Caco-2 (cell line): ENCODE measurements at regions of chr4 and their contacts with region 1.

Region 1: GRCh38 chr4:47836641-47837093 is 1.2 kb downstream of the CORIN start:
- DNase-seq: peak; percentile 84 to 87
- H3K4me3 ChIP-seq: peak overlapping the region; percentile 64
- H3K4me3 Mint-ChIP-seq: peak overlapping the region; percentile 83
- H3K27ac Mint-ChIP-seq: no peak overlapping the region
- H3K4me1 ChIP-seq: no peaks in the 10 kb centered on the region
- H3K4me1 Mint-ChIP-seq: peaks cover 6% of the 10 kb centered on the region
- H3K27me3 ChIP-seq: no peaks in the 10 kb centered on the region
- H3K27me3 Mint-ChIP-seq: no peaks in the 10 kb centered on the region
- CTCF ChIP-seq: peak; percentile 59 to 85

Region 2: DNA sequence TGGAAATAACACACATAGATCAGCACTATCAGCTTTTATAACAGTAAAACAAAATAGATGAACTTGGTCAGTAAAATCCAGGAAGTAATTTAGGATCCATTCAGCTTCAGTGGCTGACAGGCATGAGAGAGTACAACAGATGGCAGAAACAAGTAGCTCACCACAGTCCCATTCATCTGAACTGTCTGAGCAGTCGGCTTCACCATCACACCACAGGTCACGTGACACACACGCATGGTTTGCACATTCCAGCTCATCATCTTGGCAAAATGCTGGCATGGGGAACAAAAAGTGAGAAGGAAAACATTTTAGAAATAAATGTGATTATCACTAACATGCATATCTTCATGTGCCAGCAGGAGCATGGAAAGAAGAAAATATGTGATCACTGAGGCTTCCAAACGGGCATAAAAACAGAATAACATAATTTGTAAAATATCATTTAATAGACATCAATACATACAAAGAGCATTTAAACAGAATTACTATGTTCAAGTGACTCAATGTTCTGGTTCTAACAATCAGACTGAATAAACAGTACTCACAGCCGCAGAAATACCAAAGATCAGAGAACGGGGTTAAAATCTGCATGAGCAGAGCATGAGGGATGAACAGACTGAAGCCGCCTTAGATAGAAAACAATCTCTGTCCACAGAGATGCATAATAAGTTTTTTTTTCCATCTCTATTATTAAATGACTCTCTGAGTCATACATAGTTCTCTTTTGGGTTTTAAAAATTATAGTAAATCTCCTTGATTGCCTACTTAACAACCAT is 193.5 kb before region 1 on chr4:
- CTCF ChIA-PET with region 1: no interaction called
- POLR2A ChIA-PET with region 1: no interaction called
- intact Hi-C with region 1: no loop called
- DNase-seq: no peak
- H3K4me3 ChIP-seq: no peak overlapping the region
- H3K4me3 Mint-ChIP-seq: no peak overlapping the region
- H3K27ac Mint-ChIP-seq: no peak overlapping the region
- H3K4me1 ChIP-seq: no peaks in the 10 kb centered on the region
- H3K4me1 Mint-ChIP-seq: no peaks in the 10 kb centered on the region
- H3K27me3 ChIP-seq: no peaks in the 10 kb centered on the region
- H3K27me3 Mint-ChIP-seq: no peaks in the 10 kb centered on the region
- CTCF ChIP-seq: no peak

Region 3: GRCh38 chr4:47668810-47669408 is 167.8 kb before region 1 on chr4:
- CTCF ChIA-PET with region 1: interaction called, 12 read pairs
- POLR2A ChIA-PET with region 1: no interaction called
- intact Hi-C with region 1: loop called (anchors 1 kb)
- DNase-seq: peak in 1 of 2 experiments; percentile 49
- H3K4me3 ChIP-seq: no peak overlapping the region
- H3K4me3 Mint-ChIP-seq: no peak overlapping the region
- H3K27ac Mint-ChIP-seq: no peak overlapping the region
- H3K4me1 ChIP-seq: peaks cover 3% of the 10 kb centered on the region; the same call in 1 of the 2 replicates
- H3K4me1 Mint-ChIP-seq: peaks cover 7% of the 10 kb centered on the region
- H3K27me3 ChIP-seq: no peaks in the 10 kb centered on the region; the same call in 1 of the 2 replicates
- H3K27me3 Mint-ChIP-seq: no peaks in the 10 kb centered on the region
- CTCF ChIP-seq: peak; percentile 50 to 58

Region 4: GRCh38 chr4:47686294-47686872 is 150.3 kb before region 1 on chr4:
- CTCF ChIA-PET with region 1: interaction called, 11 read pairs
- POLR2A ChIA-PET with region 1: no interaction called
- intact Hi-C with region 1: loop called (anchors 1 kb)
- DNase-seq: peak; percentile 54 to 70
- H3K4me3 ChIP-seq: no peak overlapping the region
- H3K4me3 Mint-ChIP-seq: no peak overlapping the region
- H3K27ac Mint-ChIP-seq: no peak overlapping the region
- H3K4me1 ChIP-seq: no peaks in the 10 kb centered on the region
- H3K4me1 Mint-ChIP-seq: no peaks in the 10 kb centered on the region
- H3K27me3 ChIP-seq: no peaks in the 10 kb centered on the region
- H3K27me3 Mint-ChIP-seq: peaks cover 8% of the 10 kb centered on the region
- CTCF ChIP-seq: peak; percentile 68 to 74

Region 5: GRCh38 chr4:47704693-47705325 is 131.9 kb before region 1 on chr4:
- CTCF ChIA-PET with region 1: interaction called, 108 read pairs
- POLR2A ChIA-PET with region 1: interaction called, 3 read pairs
- intact Hi-C with region 1: loop called (anchors 1 kb)
- DNase-seq: peak; percentile 63 to 67
- H3K4me3 ChIP-seq: no peak overlapping the region
- H3K4me3 Mint-ChIP-seq: no peak overlapping the region
- H3K27ac Mint-ChIP-seq: no peak overlapping the region
- H3K4me1 ChIP-seq: no peaks in the 10 kb centered on the region
- H3K4me1 Mint-ChIP-seq: no peaks in the 10 kb centered on the region
- H3K27me3 ChIP-seq: no peaks in the 10 kb centered on the region
- H3K27me3 Mint-ChIP-seq: no peaks in the 10 kb centered on the region
- CTCF ChIP-seq: peak; percentile 49 to 73

Region 6: DNA sequence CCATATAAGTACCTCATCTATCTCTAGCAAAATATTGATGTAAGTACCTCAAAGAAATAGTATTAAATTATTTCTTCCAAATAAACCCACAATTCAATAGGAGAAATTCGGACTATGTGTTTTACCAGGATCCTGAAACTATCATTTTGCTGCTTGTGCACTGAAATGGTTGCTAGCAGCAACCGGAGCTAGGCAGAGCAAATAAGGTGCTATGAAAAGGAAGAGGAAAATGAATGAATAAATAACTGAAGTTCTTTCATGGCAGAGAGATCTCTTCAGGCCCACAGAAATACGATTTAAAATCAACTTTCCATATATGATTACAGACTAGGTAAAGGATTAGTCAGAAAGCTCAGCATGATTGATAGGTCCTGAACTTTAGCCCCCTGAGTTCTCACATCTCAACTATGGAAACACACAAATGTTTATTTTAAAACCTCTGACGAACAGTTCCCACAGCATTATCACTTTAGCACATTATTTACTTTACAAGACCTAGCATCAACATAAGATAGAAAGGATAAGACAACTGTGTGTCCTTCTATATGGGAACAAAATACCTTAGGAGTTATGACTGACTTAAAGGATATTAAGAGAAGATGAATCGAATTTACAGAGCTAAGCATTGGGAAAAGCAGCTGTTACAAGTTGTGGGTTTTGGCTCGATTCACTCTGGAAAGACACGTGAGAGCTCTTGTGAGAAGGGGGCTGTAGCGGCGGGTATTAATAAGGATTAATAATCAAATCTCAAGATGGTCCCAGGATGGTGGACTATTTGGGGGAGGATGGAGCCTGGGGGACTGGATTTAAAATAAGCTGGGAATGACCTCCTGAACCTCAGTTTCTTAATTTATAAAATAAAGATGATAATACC is 103.1 kb before region 1 on chr4:
- CTCF ChIA-PET with region 1: interaction called, 10 read pairs
- POLR2A ChIA-PET with region 1: no interaction called
- intact Hi-C with region 1: no loop called
- DNase-seq: peak in 1 of 2 experiments; percentile 24
- H3K4me3 ChIP-seq: no peak overlapping the region
- H3K4me3 Mint-ChIP-seq: peak overlapping the region; percentile 12
- H3K27ac Mint-ChIP-seq: no peak overlapping the region
- H3K4me1 ChIP-seq: peaks cover 6% of the 10 kb centered on the region
- H3K4me1 Mint-ChIP-seq: peaks cover 8% of the 10 kb centered on the region
- H3K27me3 ChIP-seq: no peaks in the 10 kb centered on the region
- H3K27me3 Mint-ChIP-seq: no peaks in the 10 kb centered on the region
- CTCF ChIP-seq: no peak

Region 7: DNA sequence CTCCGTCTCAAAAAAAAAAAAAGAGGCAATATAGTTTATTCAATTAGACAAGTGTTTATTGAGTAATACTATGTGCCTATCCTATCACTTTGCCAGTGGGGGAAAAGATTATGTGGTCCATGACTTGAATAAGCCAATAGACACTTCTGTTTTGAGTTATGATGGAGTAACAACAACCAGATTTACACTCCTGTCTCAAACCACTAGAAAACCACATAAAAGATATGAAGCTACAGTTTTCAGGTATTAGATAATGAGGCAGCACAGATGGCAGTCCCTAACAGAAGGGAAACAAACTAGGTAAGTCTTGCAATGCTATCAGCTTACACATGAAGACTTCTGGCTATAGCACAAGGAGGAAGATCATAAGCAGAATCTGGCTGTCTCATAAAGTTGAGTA is 55.3 kb after region 1 on chr4:
- CTCF ChIA-PET with region 1: no interaction called
- POLR2A ChIA-PET with region 1: no interaction called
- intact Hi-C with region 1: no loop called
- DNase-seq: no peak
- H3K4me3 ChIP-seq: no peak overlapping the region
- H3K4me3 Mint-ChIP-seq: no peak overlapping the region
- H3K27ac Mint-ChIP-seq: no peak overlapping the region
- H3K4me1 ChIP-seq: no peaks in the 10 kb centered on the region
- H3K4me1 Mint-ChIP-seq: no peaks in the 10 kb centered on the region
- H3K27me3 ChIP-seq: no peaks in the 10 kb centered on the region
- H3K27me3 Mint-ChIP-seq: no peaks in the 10 kb centered on the region
- CTCF ChIP-seq: no peak

Region 8: GRCh38 chr4:47933840-47934239 is 97.2 kb after region 1 on chr4:
- CTCF ChIA-PET with region 1: interaction called, 15 read pairs
- POLR2A ChIA-PET with region 1: no interaction called
- intact Hi-C with region 1: loop called (anchors 2 kb)
- DNase-seq: peak in 1 of 2 experiments; percentile 31
- H3K4me3 ChIP-seq: no peak overlapping the region
- H3K4me3 Mint-ChIP-seq: no peak overlapping the region
- H3K27ac Mint-ChIP-seq: no peak overlapping the region
- H3K4me1 ChIP-seq: no peaks in the 10 kb centered on the region
- H3K4me1 Mint-ChIP-seq: peaks cover 4% of the 10 kb centered on the region
- H3K27me3 ChIP-seq: no peaks in the 10 kb centered on the region
- H3K27me3 Mint-ChIP-seq: no peaks in the 10 kb centered on the region
- CTCF ChIP-seq: peak; percentile 40 to 51

Region 9: DNA sequence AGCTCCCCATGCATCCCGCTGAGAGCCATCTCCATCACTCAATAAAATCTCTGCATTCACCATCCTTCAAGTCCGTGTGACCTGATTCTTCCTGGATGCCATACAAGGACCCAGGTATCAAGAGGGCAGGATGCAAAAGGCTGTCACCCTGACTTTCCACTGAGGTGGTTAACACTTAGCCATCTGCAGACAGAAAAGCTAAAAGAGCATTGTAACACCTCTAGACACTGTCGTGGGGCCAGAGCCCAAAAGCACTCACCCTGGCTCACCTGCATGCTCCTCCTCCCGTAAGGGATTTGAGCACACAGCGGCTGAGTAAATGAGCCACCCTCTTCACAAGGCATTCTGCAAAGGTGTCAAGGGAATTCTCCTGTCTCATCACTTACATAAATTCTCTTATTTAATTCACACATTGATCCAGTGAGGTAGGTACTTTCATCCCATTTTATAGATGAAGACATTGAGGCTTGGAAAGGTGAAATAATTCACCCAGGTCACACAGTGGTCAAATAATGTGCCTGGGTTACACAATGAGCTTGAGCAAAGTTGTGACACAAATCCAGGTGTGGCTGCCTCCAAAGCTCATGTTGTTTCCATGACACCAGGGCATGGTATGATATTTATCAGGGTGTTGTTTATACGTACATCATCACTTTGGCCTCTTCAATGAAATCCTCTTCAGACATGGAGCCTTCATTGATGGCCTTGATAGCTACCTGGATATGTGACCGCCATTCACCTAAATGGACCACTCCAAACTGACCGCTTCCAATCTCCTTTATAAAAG is 249.3 kb after region 1 on chr4:
- CTCF ChIA-PET with region 1: interaction called, 13 read pairs
- POLR2A ChIA-PET with region 1: no interaction called
- intact Hi-C with region 1: loop called (anchors 5 kb)
- DNase-seq: no peak
- H3K4me3 ChIP-seq: no peak overlapping the region
- H3K4me3 Mint-ChIP-seq: no peak overlapping the region
- H3K27ac Mint-ChIP-seq: no peak overlapping the region
- H3K4me1 ChIP-seq: peaks cover 35% of the 10 kb centered on the region
- H3K4me1 Mint-ChIP-seq: peaks cover 9% of the 10 kb centered on the region
- H3K27me3 ChIP-seq: no peaks in the 10 kb centered on the region
- H3K27me3 Mint-ChIP-seq: no peaks in the 10 kb centered on the region
- CTCF ChIP-seq: no peak